ENCODE measurements at regions of chr5 and their contacts with region 1.

Region 1: GRCh38 chr5:141475625-141476131 is at the start of gene PCDHGC3:
- DNase-seq: peak; percentile 36
- H3K4me3 ChIP-seq: peak within 1 kb of the TSS; percentile 56 to 77 (median 72)
- H3K27ac ChIP-seq: peak within 1 kb of the TSS; percentile 79 to 93 (median 92)
- H3K4me1 ChIP-seq: peaks cover 15 to 52% (median 28%) of the 10 kb centered on the region in 3 donors
- H3K27me3 ChIP-seq: no peaks in the 10 kb centered on the region
- CTCF ChIP-seq: peak; percentile 12 to 44 (median 33)
- POLR2A ChIP-seq: peak in 2 of 4 donors; percentile 55 to 66
- total RNA-seq, gene PCDHGC3: 36.6 to 52.5 (median 38.6) TPM

Region 2: GRCh38 chr5:140986117-140986521 is 489.6 kb before region 1 on chr5:
- intact Hi-C with region 1: no loop called
- DNase-seq: no peak
- H3K4me3 ChIP-seq: no peak overlapping the region
- H3K27ac ChIP-seq: no peak overlapping the region
- H3K4me1 ChIP-seq: no peaks in the 10 kb centered on the region
- H3K27me3 ChIP-seq: no peaks in the 10 kb centered on the region
- CTCF ChIP-seq: no peak
- POLR2A ChIP-seq: no peak

Region 3: DNA sequence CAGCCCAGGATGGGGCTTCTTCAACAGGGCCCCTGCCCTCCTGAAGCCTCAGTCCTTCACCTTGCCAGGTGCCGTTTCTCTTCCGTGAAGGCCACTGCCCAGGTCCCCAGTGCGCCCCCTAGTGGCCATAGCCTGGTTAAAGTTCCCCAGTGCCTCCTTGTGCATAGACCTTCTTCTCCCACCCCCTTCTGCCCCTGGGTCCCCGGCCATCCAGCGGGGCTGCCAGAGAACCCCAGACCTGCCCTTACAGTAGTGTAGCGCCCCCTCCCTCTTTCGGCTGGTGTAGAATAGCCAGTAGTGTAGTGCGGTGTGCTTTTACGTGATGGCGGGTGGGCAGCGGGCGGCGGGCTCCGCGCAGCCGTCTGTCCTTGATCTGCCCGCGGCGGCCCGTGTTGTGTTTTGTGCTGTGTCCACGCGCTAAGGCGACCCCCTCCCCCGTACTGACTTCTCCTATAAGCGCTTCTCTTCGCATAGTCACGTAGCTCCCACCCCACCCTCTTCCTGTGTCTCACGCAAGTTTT is 36.8 kb after region 1 on chr5:
- intact Hi-C with region 1: loop called (anchors 5 kb)
- DNase-seq: no peak
- H3K4me3 ChIP-seq: peak overlapping the region; percentile 42 to 76 (median 64)
- H3K27ac ChIP-seq: peak overlapping the region; percentile 86 to 95 (median 94)
- H3K4me1 ChIP-seq: peaks cover 21 to 87% (median 54%) of the 10 kb centered on the region in 3 donors
- H3K27me3 ChIP-seq: no peaks in the 10 kb centered on the region
- CTCF ChIP-seq: peak; percentile 72 to 87 (median 83)
- POLR2A ChIP-seq: no peak

Region 4: GRCh38 chr5:141618804-141619554 is 143.3 kb after region 1 on chr5 and contains the start of gene DIAPH1:
- intact Hi-C with region 1: no loop called
- DNase-seq: peak; percentile 90
- H3K4me3 ChIP-seq: peak within 1 kb of the TSS; percentile 76 to 100 (median 84)
- H3K27ac ChIP-seq: peak within 1 kb of the TSS; percentile 97 to 99 (median 97)
- H3K4me1 ChIP-seq: peaks cover 17 to 40% (median 21%) of the 10 kb centered on the region in 3 donors
- H3K27me3 ChIP-seq: no peaks in the 10 kb centered on the region
- CTCF ChIP-seq: peak; percentile 98 to 100 (median 99)
- POLR2A ChIP-seq: peak in 3 of 4 donors; percentile 77 to 95 (median 85)
- total RNA-seq, gene DIAPH1: 63.0 to 157 (median 124) TPM